Activated CD4-positive, alpha-beta memory T cell treated with anti-CD3 and anti-CD28 coated beads for 36 hours (primary cell): ENCODE measurements at regions of chr14 and their contacts with region 1.

Region 1: DNA sequence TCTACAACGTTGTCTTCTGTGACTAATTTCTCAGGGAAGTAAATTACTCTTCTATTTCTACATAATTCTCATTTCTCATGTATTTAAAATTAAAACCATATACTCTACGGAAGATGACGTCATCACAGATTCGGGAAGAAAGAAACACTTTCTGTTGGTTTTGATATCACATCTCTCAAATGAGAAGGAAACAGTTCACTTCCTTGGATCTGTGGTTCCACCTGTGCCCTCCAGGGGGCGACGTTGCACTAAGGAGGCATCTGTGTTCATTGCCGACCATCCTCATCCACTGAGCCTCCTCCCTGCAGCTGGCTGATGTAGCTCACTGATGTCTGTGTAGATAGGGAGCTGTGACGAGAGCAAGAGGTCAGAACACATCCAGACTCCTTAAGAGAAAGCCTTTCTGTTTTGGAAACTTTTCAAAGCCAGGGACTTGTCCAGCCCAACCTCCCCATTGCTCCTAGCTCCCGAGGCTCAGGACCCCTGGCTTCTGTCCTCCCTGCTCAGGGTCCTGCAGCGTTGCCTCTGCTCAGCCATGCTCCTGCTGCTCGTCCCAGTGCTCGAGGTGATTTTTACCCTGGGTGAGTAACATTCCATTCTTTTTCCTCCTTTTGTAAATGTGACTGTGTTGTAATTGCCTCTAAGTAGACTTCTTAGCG is 172.7 kb upstream of the OR4E1 start:
- DNase-seq: peak; percentile 88
- H3K4me3 Mint-ChIP-seq: peak overlapping the region; percentile 84
- H3K27ac Mint-ChIP-seq: peak overlapping the region; percentile 90
- H3K4me1 Mint-ChIP-seq: peaks cover 9% of the 10 kb centered on the region
- H3K27me3 Mint-ChIP-seq: peaks cover 14% of the 10 kb centered on the region

Region 2: GRCh38 chr14:21860172-21860571 is 13.8 kb after region 1 on chr14:
- CTCF ChIA-PET with region 1: interaction called, 80 read pairs
- POLR2A ChIA-PET with region 1: interaction called, 21 read pairs
- intact Hi-C with region 1: no loop called
- DNase-seq: peak; percentile 40
- H3K4me3 Mint-ChIP-seq: peak overlapping the region; percentile 22
- H3K27ac Mint-ChIP-seq: peak overlapping the region; percentile 73
- H3K4me1 Mint-ChIP-seq: peaks cover 4% of the 10 kb centered on the region
- H3K27me3 Mint-ChIP-seq: no peaks in the 10 kb centered on the region